BJ (cell line): ENCODE measurements at regions of chr6 and their contacts with region 1.

Region 1: GRCh38 chr6:42352856-42353564 is 98.7 kb downstream of the TRERF1 start:
- DNase-seq: no peak
- H3K4me3 ChIP-seq: no peak overlapping the region
- H3K27me3 ChIP-seq: no peaks in the 10 kb centered on the region
- CTCF ChIP-seq: no peak

Region 2: DNA sequence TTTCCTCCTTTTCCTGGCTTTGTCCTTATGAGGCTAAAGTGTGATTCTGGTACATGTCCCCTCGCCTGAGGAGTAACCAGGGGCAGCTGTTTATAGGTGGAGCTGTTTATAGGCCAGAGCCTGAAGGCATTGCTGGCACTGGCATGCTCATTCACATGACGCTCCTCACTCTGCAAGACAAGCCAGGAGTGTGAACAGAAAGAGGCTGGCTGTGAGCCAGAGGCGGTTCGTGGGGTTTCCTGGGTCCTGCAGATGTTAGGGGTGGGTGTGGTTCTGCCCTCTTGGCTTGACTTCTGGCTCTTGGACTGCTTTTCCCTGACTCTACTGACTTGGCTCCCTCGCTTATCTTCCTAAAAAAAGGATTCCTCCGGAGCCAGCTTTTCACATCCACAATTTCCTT is 727.6 kb before region 1 on chr6:
- CTCF ChIA-PET with region 1: no interaction called
- POLR2A ChIA-PET with region 1: no interaction called
- DNase-seq: no peak
- H3K4me3 ChIP-seq: no peak overlapping the region
- H3K27me3 ChIP-seq: peaks cover 4% of the 10 kb centered on the region
- CTCF ChIP-seq: no peak

Region 3: GRCh38 chr6:42453031-42453653 is 100.1 kb after region 1 on chr6:
- CTCF ChIA-PET with region 1: interaction called, 3 read pairs
- POLR2A ChIA-PET with region 1: interaction called, 17 read pairs
- DNase-seq: no peak
- H3K4me3 ChIP-seq: peak overlapping the region; percentile 85
- H3K27me3 ChIP-seq: no peaks in the 10 kb centered on the region
- CTCF ChIP-seq: no peak

Region 4: GRCh38 chr6:42505377-42505702 is 152.3 kb after region 1 on chr6:
- CTCF ChIA-PET with region 1: no interaction called
- POLR2A ChIA-PET with region 1: no interaction called
- DNase-seq: no peak
- H3K4me3 ChIP-seq: no peak overlapping the region
- H3K27me3 ChIP-seq: no peaks in the 10 kb centered on the region
- CTCF ChIP-seq: no peak